Right ventricle myocardium inferior (tissue), 1 donor: ENCODE measurements at regions of chr6 and their contacts with region 1.

Region 1: GRCh38 chr6:17599885-17600526 is at the start of gene FAM8A1:
- DNase-seq: peak; percentile 97
- ATAC-seq: peak; percentile 97
- total RNA-seq, gene FAM8A1: 16.6 TPM

Region 2: DNA sequence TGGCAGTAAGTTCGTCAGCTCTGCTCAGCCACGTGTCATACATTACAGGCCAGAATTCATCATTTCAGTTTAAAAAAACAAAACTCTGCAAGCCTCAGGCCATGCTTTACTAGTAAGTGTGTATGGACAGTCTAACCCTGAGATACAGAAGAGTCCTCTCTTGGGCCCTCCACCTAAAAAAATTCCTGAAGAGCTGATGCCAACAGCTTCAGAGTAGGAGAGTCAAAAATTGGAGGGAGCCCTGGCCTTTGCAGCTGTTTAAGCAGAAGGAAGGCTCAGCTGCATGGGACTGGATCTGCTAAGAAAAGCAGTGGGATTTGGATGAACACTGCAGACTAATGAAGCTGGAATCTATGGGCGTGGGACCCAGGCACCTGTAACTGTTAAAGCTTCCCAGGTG is 47.1 kb before region 1 on chr6:
- intact Hi-C with region 1: no loop called
- DNase-seq: no peak
- ATAC-seq: no peak

Region 3: DNA sequence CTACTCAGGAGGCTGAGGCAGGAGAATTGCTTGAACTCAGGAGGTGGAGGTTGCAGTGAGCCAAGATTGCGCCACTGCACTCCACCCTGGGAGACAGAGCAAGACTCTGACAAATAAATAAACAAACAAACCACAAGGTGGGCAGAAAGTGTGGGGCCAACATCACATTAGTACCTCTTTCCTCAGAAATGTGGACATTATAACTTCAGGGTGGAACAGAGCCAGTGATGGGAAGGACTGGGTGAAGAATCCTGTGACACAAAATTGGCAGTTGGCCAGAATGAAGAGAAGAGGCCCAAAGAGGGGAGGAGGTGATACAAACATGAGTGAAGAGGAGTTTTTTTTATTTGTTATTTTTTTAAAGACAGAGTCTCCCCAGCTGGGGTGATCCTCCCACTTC is 56.1 kb after region 1 on chr6:
- intact Hi-C with region 1: loop called (anchors 10 kb)
- DNase-seq: no peak
- ATAC-seq: no peak

Region 4: DNA sequence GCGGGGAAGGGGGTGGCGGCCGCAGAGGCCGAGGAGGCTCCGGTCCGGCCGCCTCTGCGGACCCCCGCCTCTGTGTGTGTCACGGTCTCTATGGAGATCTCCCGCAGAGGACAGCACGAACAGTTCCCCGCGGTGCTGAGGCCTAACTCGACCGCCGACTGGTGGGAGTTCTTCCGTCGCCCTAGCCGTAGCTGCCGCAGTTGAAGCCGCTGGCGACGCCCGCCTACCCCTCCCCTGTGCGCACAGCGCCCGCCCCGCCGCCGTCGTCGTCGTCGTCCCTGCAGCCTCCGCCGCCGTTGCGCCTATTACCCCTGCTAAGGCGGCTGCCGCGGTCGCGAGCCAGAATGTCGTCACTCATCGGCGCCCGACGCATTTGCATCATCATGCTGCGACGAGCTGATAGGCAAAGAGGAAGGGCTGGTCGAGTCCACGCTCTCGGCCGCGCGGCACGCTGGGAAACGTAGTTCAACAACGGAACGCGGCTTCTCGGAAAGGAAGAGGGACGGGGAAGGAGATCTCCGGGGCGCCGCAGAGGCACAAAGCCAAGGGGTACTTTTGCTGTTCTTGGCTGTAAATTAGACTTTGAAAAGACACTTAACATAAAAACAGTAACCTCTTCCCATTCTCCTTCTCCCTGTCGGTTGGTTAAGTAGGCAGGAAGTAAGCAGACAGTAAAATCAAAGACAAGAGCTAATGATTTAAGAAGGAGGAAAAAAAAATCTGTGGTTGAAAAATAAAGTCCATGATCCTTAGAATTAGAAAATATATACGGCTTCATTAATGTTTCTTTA is 106.8 kb after region 1 on chr6 and contains the start of gene NUP153:
- intact Hi-C with region 1: loop called (anchors 2 kb)
- DNase-seq: peak; percentile 99
- ATAC-seq: peak; percentile 89
- total RNA-seq, gene NUP153: 23.5 TPM